HepG2 (cell line): ENCODE measurements at regions of chr2 and their contacts with region 1.

Region 1: GRCh38 chr2:120330946-120331822 is 14.8 kb upstream of the INHBB start:
- DNase-seq: no peak
- ATAC-seq: no peak
- H3K4me3 ChIP-seq: no peak overlapping the region
- H3K27ac ChIP-seq: no peak overlapping the region
- H3K4me1 ChIP-seq: peaks cover 14% of the 10 kb centered on the region
- H3K27me3 ChIP-seq: peaks cover 3 to 83% of the 10 kb centered on the region in 2 experiments; a peak in 4 of 5 replicates
- CTCF ChIP-seq: no peak
- EP300 ChIP-seq: no peak
- POLR2A ChIP-seq: no peak
- RAD21 ChIP-seq: no peak

Region 2: GRCh38 chr2:121076885-121077549 is 745.8 kb after region 1 on chr2:
- CTCF ChIA-PET with region 1: no interaction called
- POLR2A ChIA-PET with region 1: no interaction called
- in situ Hi-C with region 1: loop called (anchors 10 kb)
- intact Hi-C with region 1: no loop called
- DNase-seq: peak; percentile 52
- ATAC-seq: peak; percentile 76
- H3K4me3 ChIP-seq: no peak overlapping the region
- H3K27ac ChIP-seq: no peak overlapping the region
- H3K4me1 ChIP-seq: 0 out of 2 replicates have a peak, but pooled peaks cover 5% of the 10 kb centered on the region
- H3K27me3 ChIP-seq: peaks cover 23 to 80% of the 10 kb centered on the region in 2 experiments
- CTCF ChIP-seq: peak; percentile 91
- EP300 ChIP-seq: no peak
- POLR2A ChIP-seq: no peak
- RAD21 ChIP-seq: no peak; the same call in 1 of the 2 replicates